Activated CD4-positive, alpha-beta memory T cell treated with anti-CD3 and anti-CD28 coated beads for 36 hours (primary cell): ENCODE measurements at regions of chr17 and their contacts with region 1.

Region 1: DNA sequence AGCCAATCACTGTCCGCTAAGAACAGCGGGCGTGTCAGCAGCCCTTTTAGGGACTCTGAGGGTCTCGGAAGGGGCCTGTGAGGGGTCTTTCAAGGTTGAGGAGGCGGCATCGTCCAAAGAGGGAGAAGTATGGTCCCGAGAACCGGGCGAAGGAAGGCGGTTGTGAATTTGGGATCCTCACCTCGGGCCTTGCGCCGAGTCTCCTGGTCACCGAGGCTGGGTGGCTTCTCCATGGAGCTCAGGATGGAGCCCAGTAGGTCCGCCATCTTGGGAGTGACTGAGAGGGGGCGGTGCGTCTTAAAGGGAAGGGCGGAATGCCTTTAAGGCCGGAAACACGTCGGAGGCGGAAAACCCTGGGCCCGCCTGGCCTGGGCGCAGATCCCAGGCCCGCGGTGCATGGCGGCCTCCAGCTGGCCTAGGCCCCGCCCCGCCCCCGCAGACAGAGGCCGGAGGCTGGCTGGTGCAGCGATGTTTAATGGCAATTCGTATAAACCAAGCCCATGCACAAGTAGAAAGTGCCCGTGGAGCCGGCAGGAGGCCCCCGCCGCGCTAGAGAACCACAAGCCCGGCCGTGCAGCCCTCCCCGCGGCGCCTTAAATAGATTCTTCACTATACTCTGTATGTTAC is at the start of gene SPAG7:
- DNase-seq: peak; percentile 96
- H3K4me3 Mint-ChIP-seq: no peak within 1 kb of the TSS
- H3K27ac Mint-ChIP-seq: no peak within 1 kb of the TSS
- H3K4me1 Mint-ChIP-seq: peaks cover 37% of the 10 kb centered on the region
- H3K27me3 Mint-ChIP-seq: no peaks in the 10 kb centered on the region
- total RNA-seq, gene SPAG7: 60.6 to 65.8 TPM

Region 2: GRCh38 chr17:4908301-4908700 is 59.4 kb before region 1 on chr17:
- CTCF ChIA-PET with region 1: interaction called, 4 read pairs
- POLR2A ChIA-PET with region 1: interaction called, 3 read pairs
- intact Hi-C with region 1: loop called (anchors 1 kb)
- DNase-seq: peak; percentile 34
- H3K4me3 Mint-ChIP-seq: no peak overlapping the region
- H3K27ac Mint-ChIP-seq: no peak overlapping the region
- H3K4me1 Mint-ChIP-seq: peaks cover 4% of the 10 kb centered on the region
- H3K27me3 Mint-ChIP-seq: no peaks in the 10 kb centered on the region

Region 3: GRCh38 chr17:4980644-4981216 is 13.1 kb after region 1 on chr17:
- CTCF ChIA-PET with region 1: interaction called, 21 read pairs
- POLR2A ChIA-PET with region 1: interaction called, 32 read pairs
- intact Hi-C with region 1: no loop called
- DNase-seq: peak; percentile 40
- H3K4me3 Mint-ChIP-seq: no peak overlapping the region
- H3K27ac Mint-ChIP-seq: peak overlapping the region; percentile 34
- H3K4me1 Mint-ChIP-seq: peaks cover 23% of the 10 kb centered on the region
- H3K27me3 Mint-ChIP-seq: no peaks in the 10 kb centered on the region

Region 4: GRCh38 chr17:4986951-4987766 is 19.5 kb after region 1 on chr17 and contains the start of gene CAMTA2:
- CTCF ChIA-PET with region 1: interaction called, 10 read pairs
- POLR2A ChIA-PET with region 1: interaction called, 32 read pairs
- intact Hi-C with region 1: loop called (anchors 1 kb)
- DNase-seq: peak; percentile 90
- H3K4me3 Mint-ChIP-seq: peak within 1 kb of the TSS; percentile 91
- H3K27ac Mint-ChIP-seq: peak within 1 kb of the TSS; percentile 94
- H3K4me1 Mint-ChIP-seq: peaks cover 42% of the 10 kb centered on the region
- H3K27me3 Mint-ChIP-seq: no peaks in the 10 kb centered on the region
- total RNA-seq, gene CAMTA2: 101 to 109 TPM

Region 5: DNA sequence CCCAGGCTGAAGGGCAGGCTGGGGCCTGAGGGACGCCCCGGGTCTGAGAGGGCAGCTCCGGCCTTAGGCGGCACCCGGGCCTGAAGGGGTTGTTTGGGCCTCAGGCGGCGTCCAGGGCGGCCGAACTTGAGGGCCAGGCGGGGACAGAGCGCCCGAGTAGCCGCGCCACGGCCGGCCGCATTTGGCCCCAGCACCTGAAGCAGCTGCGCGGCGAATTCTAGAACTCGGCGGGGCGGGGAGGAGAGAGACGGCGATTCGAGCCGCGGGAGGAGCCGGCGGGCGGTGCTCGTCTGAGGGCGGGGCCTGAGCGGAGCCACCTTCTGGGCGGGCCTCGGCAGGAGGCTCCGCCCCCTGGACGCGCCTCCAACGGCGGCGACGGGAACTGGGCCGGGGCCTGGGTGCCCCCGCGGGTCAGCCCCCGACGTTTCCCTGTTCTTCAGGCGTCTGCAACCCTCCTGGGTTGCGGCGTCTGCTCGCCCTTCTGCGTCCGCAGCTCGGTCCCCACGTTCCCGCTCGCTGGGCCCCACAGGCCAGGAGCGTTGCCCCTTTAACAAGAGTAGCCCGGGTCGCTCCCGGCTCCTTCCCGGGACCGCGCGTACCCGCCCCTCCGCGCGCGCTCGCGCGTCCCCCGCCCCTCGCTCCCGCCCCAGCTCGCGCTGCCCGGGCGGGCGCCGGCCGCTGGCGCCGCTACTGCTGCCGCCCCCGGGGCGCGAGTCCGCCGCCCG is 29.8 kb after region 1 on chr17 and contains the starts of genes INCA1 and KIF1C:
- CTCF ChIA-PET with region 1: no interaction called
- POLR2A ChIA-PET with region 1: interaction called, 10 read pairs
- intact Hi-C with region 1: loop called (anchors 1 kb)
- DNase-seq: peak; percentile 93
- H3K4me3 Mint-ChIP-seq: peak within 1 kb of the TSS; percentile 82
- H3K27ac Mint-ChIP-seq: peak within 1 kb of the TSS; percentile 42
- H3K4me1 Mint-ChIP-seq: peaks cover 20% of the 10 kb centered on the region
- H3K27me3 Mint-ChIP-seq: no peaks in the 10 kb centered on the region
- total RNA-seq, gene INCA1: 0.40 TPM in 1 of 2 experiments, not detected in the other
- total RNA-seq, gene KIF1C: 43.9 to 48.8 TPM

Region 6: DNA sequence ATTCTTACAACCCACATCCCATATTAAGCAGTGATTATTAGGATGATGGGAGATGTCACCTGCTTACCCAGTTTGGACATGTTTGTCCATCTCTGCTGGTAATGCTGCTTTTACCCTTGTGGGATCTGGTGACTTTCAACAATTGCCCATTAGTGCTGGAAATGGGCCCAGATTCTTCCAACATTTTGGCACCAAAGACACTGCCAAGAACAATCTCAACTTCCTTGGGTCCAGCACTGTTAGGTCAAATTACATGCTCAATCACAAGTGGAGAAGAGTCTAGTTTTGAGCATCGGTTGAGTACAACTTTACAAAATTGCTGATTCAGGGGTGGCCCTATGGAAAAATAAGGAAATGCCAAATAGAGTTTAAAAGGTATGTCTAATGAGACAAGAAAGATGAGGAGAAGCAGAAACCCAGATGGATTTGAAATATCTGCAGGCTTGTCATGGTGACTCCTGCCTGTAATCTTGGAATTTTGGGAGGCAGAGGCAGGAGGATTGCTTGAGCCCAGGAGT is 97.6 kb after region 1 on chr17:
- CTCF ChIA-PET with region 1: interaction called, 12 read pairs
- POLR2A ChIA-PET with region 1: interaction called, 4 read pairs
- intact Hi-C with region 1: no loop called
- DNase-seq: no peak
- H3K4me3 Mint-ChIP-seq: no peak overlapping the region
- H3K27ac Mint-ChIP-seq: no peak overlapping the region
- H3K4me1 Mint-ChIP-seq: peaks cover 9% of the 10 kb centered on the region
- H3K27me3 Mint-ChIP-seq: no peaks in the 10 kb centered on the region